ENCODE measurements at regions of chr2 and their contacts with region 1.

Region 1: GRCh38 chr2:220510668-220511067 is 883.2 kb downstream of the SLC4A3 start:
- DNase-seq: no peak
- H3K4me3 Mint-ChIP-seq: no peak overlapping the region
- H3K27ac Mint-ChIP-seq: no peak overlapping the region
- H3K4me1 Mint-ChIP-seq: peaks cover 24% of the 10 kb centered on the region
- H3K27me3 Mint-ChIP-seq: no peaks in the 10 kb centered on the region
- CTCF ChIP-seq: no peak

Region 2: GRCh38 chr2:220410296-220410695 is 100.4 kb before region 1 on chr2:
- CTCF ChIA-PET with region 1: no interaction called
- POLR2A ChIA-PET with region 1: no interaction called
- intact Hi-C with region 1: no loop called
- DNase-seq: no peak
- H3K4me3 Mint-ChIP-seq: no peak overlapping the region
- H3K27ac Mint-ChIP-seq: no peak overlapping the region
- H3K4me1 Mint-ChIP-seq: peaks cover 6% of the 10 kb centered on the region
- H3K27me3 Mint-ChIP-seq: no peaks in the 10 kb centered on the region
- CTCF ChIP-seq: no peak

Region 3: GRCh38 chr2:220499225-220499624 is 11.4 kb before region 1 on chr2:
- CTCF ChIA-PET with region 1: interaction called, 3 read pairs
- POLR2A ChIA-PET with region 1: interaction called, 11 read pairs
- intact Hi-C with region 1: no loop called
- DNase-seq: peak; percentile 65
- H3K4me3 Mint-ChIP-seq: no peak overlapping the region
- H3K27ac Mint-ChIP-seq: no peak overlapping the region
- H3K4me1 Mint-ChIP-seq: peaks cover 6% of the 10 kb centered on the region
- H3K27me3 Mint-ChIP-seq: no peaks in the 10 kb centered on the region
- CTCF ChIP-seq: no peak

Measured in MCF 10A (cell line).